Activated CD8-positive, alpha-beta T cell treated with anti-CD3 and anti-CD28 coated beads, Interleukin-2, amount 10 ng/mL, durations not matched to agents 7 days and 5 days (primary cell): ENCODE measurements at regions of chr15 and their contacts with region 1.

Region 1: GRCh38 chr15:38683382-38684242 is 119.0 kb upstream of the RASGRP1 start:
- DNase-seq: peak; percentile 85
- ATAC-seq: peak; percentile 56
- H3K4me3 Mint-ChIP-seq: peak overlapping the region; percentile 64
- H3K27ac Mint-ChIP-seq: peak overlapping the region; percentile 92
- H3K4me1 Mint-ChIP-seq: peaks cover 71% of the 10 kb centered on the region
- H3K27me3 Mint-ChIP-seq: no peaks in the 10 kb centered on the region

Region 2: DNA sequence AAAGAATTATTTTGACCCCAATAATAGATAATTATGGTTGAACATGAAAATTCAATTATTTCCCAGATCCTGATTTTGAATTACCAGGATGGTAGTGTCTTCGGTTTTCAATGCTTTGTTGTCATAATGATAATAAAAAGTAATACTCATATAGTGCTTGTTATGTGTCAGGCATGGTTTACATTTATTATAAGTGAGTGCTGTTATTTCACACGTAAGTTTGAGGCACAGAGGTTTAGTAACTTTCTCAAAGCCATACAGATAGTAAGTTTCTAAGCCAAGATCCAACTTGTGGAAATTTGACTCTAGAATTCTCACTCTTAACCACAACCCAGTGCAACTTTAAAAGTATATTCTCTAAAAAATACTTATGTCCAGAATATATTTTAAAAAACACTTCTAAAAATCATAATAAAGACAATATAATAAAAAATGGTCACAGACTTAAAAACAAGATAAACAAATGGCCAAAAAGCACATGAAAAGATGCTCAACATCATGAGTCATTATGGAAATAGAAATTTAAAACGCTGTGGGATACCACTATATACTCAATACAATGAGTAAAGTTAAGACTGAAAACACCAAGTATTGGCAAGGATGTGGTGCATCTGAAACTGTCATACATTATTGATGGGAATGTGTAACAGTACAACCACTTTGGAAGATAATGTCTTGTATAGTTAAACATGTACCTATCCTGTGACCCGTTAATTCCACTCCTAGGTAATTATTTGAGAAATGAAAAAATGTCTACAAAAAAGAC is 385.8 kb before region 1 on chr15:
- CTCF ChIA-PET with region 1: no interaction called
- POLR2A ChIA-PET with region 1: no interaction called
- DNase-seq: no peak
- ATAC-seq: no peak
- H3K4me3 Mint-ChIP-seq: no peak overlapping the region
- H3K27ac Mint-ChIP-seq: no peak overlapping the region
- H3K4me1 Mint-ChIP-seq: peaks cover 4% of the 10 kb centered on the region
- H3K27me3 Mint-ChIP-seq: peaks cover 6% of the 10 kb centered on the region

Region 3: GRCh38 chr15:38440353-38441129 is 243.1 kb before region 1 on chr15:
- CTCF ChIA-PET with region 1: interaction called, 151 read pairs
- POLR2A ChIA-PET with region 1: interaction called, 3 read pairs
- DNase-seq: peak; percentile 73
- ATAC-seq: peak; percentile 82
- H3K4me3 Mint-ChIP-seq: no peak overlapping the region
- H3K27ac Mint-ChIP-seq: no peak overlapping the region
- H3K4me1 Mint-ChIP-seq: peaks cover 11% of the 10 kb centered on the region
- H3K27me3 Mint-ChIP-seq: peaks cover 34% of the 10 kb centered on the region

Region 4: DNA sequence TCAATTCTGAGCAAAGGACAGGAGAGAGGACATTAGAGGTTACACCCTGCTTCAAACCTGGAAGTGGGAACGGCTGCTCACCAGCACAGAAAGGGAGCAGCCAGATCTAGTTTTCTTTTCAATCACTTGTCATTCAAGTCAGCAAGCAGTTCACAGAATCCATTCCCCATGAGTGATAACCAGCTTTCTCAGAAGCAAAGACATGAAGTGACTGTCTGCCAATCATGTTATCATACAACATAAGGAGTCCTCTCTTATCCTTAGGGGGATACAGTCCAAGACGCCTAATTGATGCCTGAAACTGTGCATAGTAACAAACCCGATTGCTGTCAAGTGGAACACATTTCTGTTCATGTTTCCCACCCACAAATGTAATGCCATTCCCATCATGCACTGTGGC is 175.0 kb before region 1 on chr15:
- CTCF ChIA-PET with region 1: interaction called, 56 read pairs
- POLR2A ChIA-PET with region 1: interaction called, 4 read pairs
- DNase-seq: no peak
- ATAC-seq: no peak
- H3K4me3 Mint-ChIP-seq: no peak overlapping the region
- H3K27ac Mint-ChIP-seq: peak overlapping the region; percentile 60
- H3K4me1 Mint-ChIP-seq: peaks cover 13% of the 10 kb centered on the region
- H3K27me3 Mint-ChIP-seq: no peaks in the 10 kb centered on the region

Region 5: DNA sequence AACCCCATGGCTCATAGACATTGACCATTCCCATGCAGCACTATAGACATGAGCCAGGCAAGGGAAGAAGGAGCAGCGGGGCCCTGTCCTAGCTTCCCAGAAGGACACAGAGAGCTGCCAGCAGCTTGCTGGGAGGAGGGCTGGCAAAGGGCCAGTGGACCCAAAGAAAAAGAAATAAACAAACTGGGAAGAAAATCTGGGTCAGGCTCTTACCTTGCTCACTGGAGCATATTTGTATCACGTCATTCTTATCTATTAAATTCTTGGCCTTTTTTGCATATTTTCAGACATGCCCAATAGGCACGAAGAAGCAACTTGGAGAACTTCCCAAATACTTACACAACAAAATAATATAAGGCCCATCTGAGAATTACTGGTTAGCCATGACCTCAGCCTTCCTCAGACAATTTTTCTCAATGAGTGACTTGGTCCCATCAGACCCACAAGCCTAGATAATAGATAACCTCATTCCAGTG is 147.4 kb before region 1 on chr15:
- CTCF ChIA-PET with region 1: interaction called, 10 read pairs
- POLR2A ChIA-PET with region 1: interaction called, 3 read pairs
- DNase-seq: peak; percentile 2
- ATAC-seq: no peak
- H3K4me3 Mint-ChIP-seq: no peak overlapping the region
- H3K27ac Mint-ChIP-seq: peak overlapping the region; percentile 73
- H3K4me1 Mint-ChIP-seq: peaks cover 97% of the 10 kb centered on the region
- H3K27me3 Mint-ChIP-seq: no peaks in the 10 kb centered on the region

Region 6: GRCh38 chr15:38589502-38589901 is 94.1 kb before region 1 on chr15:
- CTCF ChIA-PET with region 1: interaction called, 16 read pairs
- POLR2A ChIA-PET with region 1: no interaction called
- DNase-seq: no peak
- ATAC-seq: no peak
- H3K4me3 Mint-ChIP-seq: no peak overlapping the region
- H3K27ac Mint-ChIP-seq: no peak overlapping the region
- H3K4me1 Mint-ChIP-seq: peaks cover 34% of the 10 kb centered on the region
- H3K27me3 Mint-ChIP-seq: no peaks in the 10 kb centered on the region

Region 7: DNA sequence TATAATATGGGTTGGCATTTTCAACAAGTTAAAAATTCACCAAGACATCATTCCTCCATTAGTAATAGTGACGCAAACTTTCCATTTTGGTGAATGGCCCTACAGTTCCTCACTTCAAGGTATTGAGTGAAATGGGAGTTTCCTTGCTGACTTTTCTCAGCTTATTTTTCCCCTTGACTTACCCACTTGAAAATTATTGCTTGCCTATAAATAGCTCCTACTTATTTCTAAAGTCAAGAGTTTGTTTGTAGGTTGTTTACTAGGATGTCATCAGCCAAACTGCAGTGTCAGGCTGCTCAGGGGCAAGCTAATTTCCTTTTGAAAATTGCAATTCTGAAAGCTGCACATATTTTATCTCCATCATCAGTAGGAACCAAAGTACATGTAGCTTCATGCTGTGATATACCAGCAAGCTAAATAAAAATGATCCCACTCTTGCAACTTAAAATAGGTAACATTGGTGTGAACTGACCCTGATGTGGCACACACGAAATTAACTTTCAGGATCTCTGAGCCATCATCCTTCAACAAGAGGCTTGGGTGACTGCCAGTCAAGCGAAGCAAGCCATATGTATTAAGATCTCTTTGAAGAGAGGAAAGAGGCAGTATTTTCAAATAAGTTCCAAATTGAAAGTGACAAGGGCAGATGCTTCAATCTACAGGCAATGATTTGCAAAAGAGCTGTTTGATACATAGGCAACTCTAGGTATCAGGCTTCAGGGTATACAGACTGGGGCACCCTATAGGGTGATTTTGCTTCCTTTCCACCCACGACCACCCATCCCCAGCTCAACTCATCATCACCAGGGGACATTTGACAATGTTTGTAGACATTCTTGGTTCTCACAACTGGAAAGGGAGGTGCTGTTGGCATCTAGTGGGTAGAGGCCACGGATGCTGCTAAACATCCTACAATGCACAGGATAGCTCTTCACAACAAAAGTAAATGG is 52.2 kb before region 1 on chr15:
- CTCF ChIA-PET with region 1: interaction called, 20 read pairs
- POLR2A ChIA-PET with region 1: no interaction called
- DNase-seq: no peak
- ATAC-seq: no peak
- H3K4me3 Mint-ChIP-seq: no peak overlapping the region
- H3K27ac Mint-ChIP-seq: peak overlapping the region; percentile 51
- H3K4me1 Mint-ChIP-seq: peaks cover 32% of the 10 kb centered on the region
- H3K27me3 Mint-ChIP-seq: no peaks in the 10 kb centered on the region

Region 8: DNA sequence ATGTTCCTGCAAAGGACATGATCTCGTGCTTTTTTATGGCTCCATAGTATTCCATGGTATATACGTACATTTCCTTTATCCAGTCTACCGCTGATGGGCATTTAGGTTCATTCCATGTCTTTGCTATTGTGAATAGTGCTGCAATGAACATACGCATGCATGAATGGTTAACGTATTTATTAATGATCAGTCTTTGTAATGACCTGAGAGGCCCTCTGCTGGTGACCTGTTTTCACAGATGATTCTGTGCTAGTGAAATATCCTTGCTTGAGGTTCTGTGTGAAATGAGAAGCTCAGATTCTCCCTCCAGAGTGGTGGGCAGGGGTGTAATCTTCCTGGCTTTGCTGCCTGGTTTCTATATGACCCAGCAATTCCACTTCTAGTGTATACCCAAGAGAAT is 41.2 kb after region 1 on chr15:
- CTCF ChIA-PET with region 1: no interaction called
- POLR2A ChIA-PET with region 1: no interaction called
- DNase-seq: no peak
- ATAC-seq: no peak
- H3K4me3 Mint-ChIP-seq: no peak overlapping the region
- H3K27ac Mint-ChIP-seq: no peak overlapping the region
- H3K4me1 Mint-ChIP-seq: no peaks in the 10 kb centered on the region
- H3K27me3 Mint-ChIP-seq: peaks cover 3% of the 10 kb centered on the region